ENCODE measurements at regions of chr11 and their contacts with region 1.

Region 1: DNA sequence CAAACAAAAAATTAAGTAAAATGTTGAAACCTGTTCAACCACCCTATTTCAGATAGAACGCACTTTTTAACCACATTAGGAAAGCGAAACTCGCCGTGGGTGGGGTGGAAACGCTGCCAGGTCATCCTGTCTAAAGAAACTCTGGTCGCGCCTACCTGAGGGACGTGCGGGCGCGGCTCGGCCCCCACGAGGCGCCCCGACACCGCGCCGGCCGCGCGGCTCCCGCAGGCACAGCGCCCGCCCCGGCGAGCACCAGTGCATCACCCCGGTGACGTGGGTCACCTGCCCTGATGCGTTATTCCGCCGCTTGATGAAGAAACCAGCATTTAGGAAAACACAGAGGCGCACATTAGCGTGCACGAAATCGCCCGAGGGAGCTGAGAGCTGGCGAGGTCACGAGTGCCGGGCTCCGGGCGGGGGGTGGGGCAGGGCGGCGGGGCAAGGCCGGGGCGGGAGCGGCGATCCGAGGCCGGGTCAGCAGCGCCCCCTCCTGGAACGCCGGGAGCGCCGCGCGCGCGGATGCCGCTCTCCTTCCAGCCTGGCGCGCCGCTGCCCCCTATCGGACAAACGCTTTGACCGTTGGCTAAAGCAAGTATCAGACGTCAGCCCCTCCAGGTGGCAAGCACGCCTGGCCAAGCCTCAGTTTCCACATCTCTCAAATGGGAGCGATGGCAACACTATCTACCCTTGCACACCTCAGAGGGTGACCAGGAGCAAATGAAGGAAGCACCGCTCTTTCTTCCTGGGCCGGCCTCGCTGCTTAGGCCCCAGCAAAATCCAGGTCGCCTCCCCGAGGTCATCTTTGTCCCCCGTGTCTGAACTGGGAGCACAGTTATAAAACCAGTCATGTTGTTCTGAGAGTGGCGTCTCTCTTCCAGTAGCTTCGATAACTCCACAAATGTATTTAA is 15.7 kb upstream of the SNX32 start:
- DNase-seq: peak; percentile 79 to 98 (median 89)
- ATAC-seq: peak; percentile 98
- H3K4me3 ChIP-seq: peak overlapping the region; percentile 72
- H3K4me3 Mint-ChIP-seq: peak overlapping the region; percentile 74 to 90 (median 82)
- H3K27ac ChIP-seq: peak overlapping the region; percentile 75
- H3K27ac Mint-ChIP-seq: peak overlapping the region; percentile 56 to 90 (median 76)
- H3K4me1 ChIP-seq: peaks cover 7% of the 10 kb centered on the region in 2 donors
- H3K4me1 Mint-ChIP-seq: peaks cover 6 to 21% (median 17%) of the 10 kb centered on the region in 7 donors
- H3K27me3 ChIP-seq: no peaks in the 10 kb centered on the region
- H3K27me3 Mint-ChIP-seq: peaks cover 0 to 4% (median 0%) of the 10 kb centered on the region in 5 donors

Region 2: GRCh38 chr11:65773784-65774411 is 44.2 kb before region 1 on chr11:
- CTCF ChIA-PET with region 1: interaction called, 22 read pairs
- POLR2A ChIA-PET with region 1: interaction called, 3 read pairs
- intact Hi-C with region 1: loop called in 1 of 2 experiments (anchors 1 kb)
- DNase-seq: no peak
- ATAC-seq: no peak
- H3K4me3 ChIP-seq: no peak overlapping the region
- H3K4me3 Mint-ChIP-seq: no peak overlapping the region
- H3K27ac ChIP-seq: no peak overlapping the region
- H3K27ac Mint-ChIP-seq: no peak overlapping the region
- H3K4me1 ChIP-seq: peaks cover 0 to under 1% of the 10 kb centered on the region in 2 donors
- H3K4me1 Mint-ChIP-seq: peaks cover 11 to 20% (median 14%) of the 10 kb centered on the region in 7 donors
- H3K27me3 ChIP-seq: no peaks in the 10 kb centered on the region
- H3K27me3 Mint-ChIP-seq: no peaks in the 10 kb centered on the region

Region 3: GRCh38 chr11:65779851-65780577 is 38.1 kb before region 1 on chr11:
- CTCF ChIA-PET with region 1: interaction called, 22 read pairs
- POLR2A ChIA-PET with region 1: interaction called, 15 read pairs
- intact Hi-C with region 1: loop called (anchors 1 kb)
- DNase-seq: peak; percentile 55 to 90 (median 72)
- ATAC-seq: peak; percentile 84
- H3K4me3 ChIP-seq: peak overlapping the region; percentile 74
- H3K4me3 Mint-ChIP-seq: peak overlapping the region; percentile 77 to 91 (median 86)
- H3K27ac ChIP-seq: peak overlapping the region; percentile 75
- H3K27ac Mint-ChIP-seq: peak overlapping the region in 7 of 9 donors; percentile 39 to 88 (median 73)
- H3K4me1 ChIP-seq: peaks cover 7 to 10% of the 10 kb centered on the region in 2 donors
- H3K4me1 Mint-ChIP-seq: peaks cover 5 to 20% (median 13%) of the 10 kb centered on the region in 7 donors
- H3K27me3 ChIP-seq: no peaks in the 10 kb centered on the region
- H3K27me3 Mint-ChIP-seq: peaks cover 0 to 15% (median under 1%) of the 10 kb centered on the region in 5 donors

Region 4: DNA sequence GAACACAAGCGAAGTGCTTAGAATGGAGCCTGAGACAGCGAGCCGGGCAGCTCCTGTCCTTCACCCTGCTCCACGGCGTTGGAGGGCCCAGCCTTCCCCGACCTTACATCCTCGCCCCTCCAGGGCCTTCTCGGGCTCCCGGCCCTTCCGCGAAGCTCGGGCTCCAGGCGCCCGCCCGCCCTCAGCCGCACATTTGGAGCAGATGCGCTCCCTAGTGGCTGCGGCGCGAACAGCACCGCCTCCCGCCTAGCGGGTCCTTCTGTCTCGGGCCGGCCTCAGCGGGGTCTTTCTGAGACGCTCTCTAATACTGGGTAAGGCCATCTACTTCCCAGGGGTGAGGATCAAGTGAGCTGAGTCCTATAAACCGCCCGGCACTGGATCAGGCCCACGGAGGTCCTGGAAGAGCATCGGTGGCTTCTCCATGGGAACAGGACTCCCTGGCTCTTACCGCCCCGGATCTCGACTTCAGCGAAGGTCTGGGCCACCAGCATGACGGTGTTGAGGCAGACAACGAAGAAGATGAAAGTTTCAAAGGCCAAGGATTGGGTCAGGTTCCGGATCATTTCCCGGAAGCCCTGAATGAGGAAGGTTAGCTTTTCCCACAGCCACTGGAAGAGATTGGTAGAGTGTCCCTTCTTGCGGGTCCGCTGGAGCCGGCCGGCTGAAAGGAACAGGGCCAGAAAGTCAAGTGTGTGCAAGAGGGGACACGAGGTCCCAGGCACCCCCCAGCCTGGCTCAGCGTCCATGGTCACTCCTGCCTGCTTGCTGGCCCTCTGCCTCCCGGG is 204.5 kb after region 1 on chr11:
- CTCF ChIA-PET with region 1: interaction called, 3 read pairs
- POLR2A ChIA-PET with region 1: no interaction called
- intact Hi-C with region 1: loop called in 1 of 2 experiments (anchors 1 kb)
- DNase-seq: peak; percentile 52 to 89 (median 69)
- ATAC-seq: peak; percentile 92
- H3K4me3 ChIP-seq: peak overlapping the region; percentile 39
- H3K4me3 Mint-ChIP-seq: peak overlapping the region in 9 of 10 donors; percentile 4 to 73 (median 45)
- H3K27ac ChIP-seq: no peak overlapping the region
- H3K27ac Mint-ChIP-seq: peak overlapping the region in 1 of 9 donors; percentile 59
- H3K4me1 ChIP-seq: peaks cover 0 to 5% of the 10 kb centered on the region in 2 donors
- H3K4me1 Mint-ChIP-seq: peaks cover 4 to 17% (median 5%) of the 10 kb centered on the region in 7 donors
- H3K27me3 ChIP-seq: no peaks in the 10 kb centered on the region
- H3K27me3 Mint-ChIP-seq: peaks cover 0 to 9% (median 4%) of the 10 kb centered on the region in 5 donors